ENCODE measurements at regions of chr1 and their contacts with region 1.

Region 1: DNA sequence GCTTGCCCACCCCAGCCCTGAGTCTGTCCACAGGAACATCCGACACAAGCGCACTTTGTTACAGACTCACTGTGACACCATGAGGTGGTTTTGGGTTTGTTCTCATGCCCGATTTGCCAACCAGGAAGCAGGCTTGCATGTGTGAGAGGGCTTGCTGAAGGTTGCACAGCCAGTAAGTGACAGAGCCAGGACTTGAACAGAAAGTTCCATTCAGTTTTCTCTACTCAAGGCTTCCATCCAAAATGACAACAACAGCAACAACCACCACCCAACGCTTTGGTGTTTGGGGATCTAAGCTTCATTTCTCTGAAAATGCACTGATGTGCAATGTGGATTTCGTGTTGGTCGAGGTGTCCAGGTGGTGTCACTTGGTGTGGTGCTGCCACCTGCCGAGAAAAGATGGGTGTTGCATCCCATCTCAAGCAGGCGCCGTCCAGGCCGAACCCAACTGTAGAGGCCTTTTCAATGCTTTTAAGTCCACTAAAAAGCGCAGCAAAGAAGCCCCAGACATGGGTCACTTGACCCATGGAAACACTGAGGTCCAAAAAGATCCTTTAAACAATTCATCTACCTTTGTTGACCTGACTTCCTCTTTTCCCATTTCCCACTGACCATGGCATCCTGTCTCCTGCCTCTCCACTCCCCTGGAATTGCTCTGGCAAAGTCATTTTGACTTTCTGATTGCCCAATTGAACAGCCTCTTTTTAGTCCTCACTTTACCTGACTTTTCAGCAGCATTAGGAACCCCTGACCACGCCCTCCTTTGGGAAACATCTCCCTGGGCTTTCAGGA is 12.2 kb downstream of the CITED4 start:
- DNase-seq: peak; percentile 80
- ATAC-seq: peak; percentile 92

Region 2: DNA sequence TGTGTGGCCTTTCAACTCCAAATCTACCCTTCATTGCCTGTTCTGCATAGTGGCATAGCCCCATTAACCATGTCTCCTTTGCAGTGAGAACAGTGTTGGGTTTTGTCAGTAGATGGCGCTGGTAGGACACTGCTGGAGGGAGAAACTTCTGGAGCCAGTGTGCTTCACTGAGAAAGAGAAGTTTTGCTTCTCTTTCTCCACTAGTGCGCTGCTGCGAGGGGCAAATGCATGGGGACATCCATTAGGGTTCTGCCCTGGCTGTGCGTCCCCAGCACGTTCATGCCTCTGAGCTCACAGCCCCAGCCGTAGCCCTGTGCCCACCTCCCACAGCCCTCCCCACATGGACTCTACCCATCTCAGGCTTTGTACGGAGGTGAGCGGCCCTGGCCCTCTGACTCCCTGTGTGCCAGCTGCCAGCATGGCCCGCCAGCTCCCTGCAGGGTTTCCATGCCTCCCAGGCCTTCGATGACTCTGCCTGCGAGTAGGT is 237.6 kb before region 1 on chr1:
- intact Hi-C with region 1: loop called (anchors 5 kb)
- DNase-seq: peak; percentile 78
- ATAC-seq: peak; percentile 85

Region 3: DNA sequence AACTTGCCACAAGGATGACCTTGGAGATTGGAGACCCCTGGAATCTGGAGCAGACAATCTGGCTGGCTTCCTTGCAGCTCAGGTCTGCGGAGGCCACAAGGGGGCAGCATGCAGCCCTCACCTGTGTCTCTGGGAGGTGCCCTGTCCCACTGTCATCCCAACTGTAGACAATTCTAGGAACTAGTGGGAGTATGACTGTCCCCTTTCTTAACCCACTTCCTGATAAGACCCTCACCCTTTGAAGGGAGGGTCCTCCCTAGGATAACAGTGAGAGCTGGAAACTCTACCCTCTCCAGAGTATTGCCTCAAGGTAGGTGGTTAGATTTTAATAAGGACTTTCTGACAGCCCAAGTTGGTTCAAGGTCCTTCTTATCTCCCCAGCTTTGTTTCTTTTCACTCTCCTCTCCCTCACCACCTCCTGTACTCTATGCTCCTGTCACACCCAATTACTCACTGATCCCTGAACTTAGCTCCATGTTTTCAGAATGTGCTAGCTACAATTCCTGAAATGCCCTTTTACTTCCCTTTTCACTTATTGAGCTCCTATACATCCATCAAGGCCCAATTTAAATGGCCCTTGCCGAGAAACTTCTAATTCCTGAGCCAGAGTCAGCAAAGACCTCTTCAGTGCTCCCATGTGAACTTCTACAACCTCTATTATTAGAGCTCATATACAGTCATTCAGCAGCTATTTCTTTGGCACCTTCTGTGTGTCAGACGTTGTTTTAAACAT is 75.6 kb before region 1 on chr1:
- intact Hi-C with region 1: loop called (anchors 10 kb)
- DNase-seq: no peak
- ATAC-seq: peak; percentile 47

Region 4: GRCh38 chr1:40951943-40952743 is 102.1 kb after region 1 on chr1:
- intact Hi-C with region 1: loop called (anchors 2 kb)
- DNase-seq: peak; percentile 82
- ATAC-seq: peak; percentile 84

Measured in sciatic nerve (tissue), 2 donors.